ENCODE measurements at regions of chr13 and their contacts with region 1.

Region 1: DNA sequence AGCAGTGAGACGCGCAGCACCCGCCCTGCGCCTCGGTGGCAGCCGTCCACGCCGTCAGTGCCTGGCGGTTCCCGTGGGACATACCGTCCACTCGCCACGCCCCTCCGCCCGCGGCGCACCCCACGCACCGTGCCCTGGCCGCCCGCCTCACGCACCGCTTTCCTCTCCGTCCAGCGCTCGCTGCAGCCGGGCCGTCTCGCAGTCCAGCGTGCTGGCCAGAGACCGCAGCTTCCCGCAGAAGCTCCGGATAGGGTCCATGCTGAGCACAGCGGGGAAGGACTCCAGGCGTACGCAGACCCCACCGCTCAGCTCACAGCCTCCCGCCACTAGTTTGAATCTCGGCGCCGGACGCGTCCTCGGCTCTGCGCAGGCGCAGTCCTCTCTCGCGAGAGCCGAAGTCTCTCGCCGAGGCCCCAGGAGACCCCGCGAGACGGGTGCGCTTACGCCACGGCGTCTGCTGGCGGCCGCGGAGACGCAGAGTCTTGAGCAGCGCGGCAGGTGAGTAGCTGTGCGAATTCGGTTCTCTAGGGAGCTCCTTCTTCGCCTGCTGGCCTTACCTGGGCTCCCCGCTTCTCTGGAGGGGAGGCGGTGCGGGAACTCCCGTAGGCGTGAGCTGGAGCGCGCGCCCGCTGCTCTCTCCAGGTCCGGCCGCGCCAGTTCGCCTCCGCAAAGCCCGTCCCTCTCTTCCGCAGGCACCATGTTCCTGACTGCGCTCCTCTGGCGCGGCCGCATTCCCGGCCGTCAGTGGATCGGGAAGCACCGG is at the starts of genes MRPL57 and SKA3:
- DNase-seq: peak; percentile 92
- H3K4me3 Mint-ChIP-seq: peak within 1 kb of the TSS; percentile 99
- H3K27ac Mint-ChIP-seq: peak within 1 kb of the TSS; percentile 90
- H3K4me1 Mint-ChIP-seq: no peaks in the 10 kb centered on the region
- H3K27me3 Mint-ChIP-seq: no peaks in the 10 kb centered on the region
- CTCF ChIP-seq: no peak
- total RNA-seq, gene MRPL57: 16.8 and 20.8 TPM in 2 replicates
- total RNA-seq, gene SKA3: 5.9 and 16.4 TPM in 2 replicates

Region 2: GRCh38 chr13:20921572-20921971 is 254.8 kb before region 1 on chr13:
- CTCF ChIA-PET with region 1: no interaction called
- POLR2A ChIA-PET with region 1: no interaction called
- intact Hi-C with region 1: no loop called
- DNase-seq: no peak
- H3K4me3 Mint-ChIP-seq: no peak overlapping the region
- H3K27ac Mint-ChIP-seq: no peak overlapping the region
- H3K4me1 Mint-ChIP-seq: no peaks in the 10 kb centered on the region
- H3K27me3 Mint-ChIP-seq: no peaks in the 10 kb centered on the region
- CTCF ChIP-seq: no peak

Region 3: DNA sequence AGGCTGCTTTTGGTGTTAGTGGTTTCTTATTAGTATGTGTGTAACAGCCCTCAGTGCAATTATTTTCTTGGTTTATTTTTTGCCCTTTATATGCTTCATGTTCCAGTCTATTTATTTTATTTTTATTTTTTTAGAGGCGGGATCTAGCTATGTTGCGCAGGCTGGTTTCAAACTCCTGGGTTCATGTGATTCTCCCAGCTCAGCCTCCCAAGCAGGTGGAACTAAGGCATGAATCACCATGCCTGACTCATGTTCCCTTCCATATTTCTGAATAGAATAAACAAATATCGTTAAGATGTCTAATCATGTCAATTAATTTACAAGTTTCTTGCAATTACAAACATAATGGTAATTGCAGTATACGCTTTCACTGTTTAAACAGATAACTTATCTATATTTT is 11.8 kb before region 1 on chr13:
- CTCF ChIA-PET with region 1: interaction called, 15 read pairs
- POLR2A ChIA-PET with region 1: interaction called, 52 read pairs
- intact Hi-C with region 1: no loop called
- DNase-seq: peak; percentile 67
- H3K4me3 Mint-ChIP-seq: no peak overlapping the region
- H3K27ac Mint-ChIP-seq: peak overlapping the region; percentile 50
- H3K4me1 Mint-ChIP-seq: peaks cover 5% of the 10 kb centered on the region
- H3K27me3 Mint-ChIP-seq: no peaks in the 10 kb centered on the region
- CTCF ChIP-seq: no peak